CD8-positive, alpha-beta T cell (primary cell): ENCODE measurements at regions of chr1 and their contacts with region 1.

Region 1: GRCh38 chr1:10209905-10210810 is at the start of gene KIF1B:
- DNase-seq: peak; percentile 92 to 98 (median 97)
- ATAC-seq: peak; percentile 98
- H3K4me3 ChIP-seq: peak within 1 kb of the TSS; percentile 67 to 82
- H3K4me3 Mint-ChIP-seq: peak within 1 kb of the TSS; percentile 91
- H3K27ac ChIP-seq: peak within 1 kb of the TSS; percentile 54 to 60
- H3K27ac Mint-ChIP-seq: peak within 1 kb of the TSS; percentile 55
- H3K4me1 ChIP-seq: peaks cover 5% of the 10 kb centered on the region
- H3K4me1 Mint-ChIP-seq: peaks cover 25% of the 10 kb centered on the region
- H3K27me3 ChIP-seq: peaks cover 0 to 2% of the 10 kb centered on the region in 2 experiments
- H3K27me3 Mint-ChIP-seq: peaks cover 2% of the 10 kb centered on the region
- CTCF ChIP-seq: peak; percentile 99
- total RNA-seq, gene KIF1B: 6.1 to 7.2 TPM

Region 2: DNA sequence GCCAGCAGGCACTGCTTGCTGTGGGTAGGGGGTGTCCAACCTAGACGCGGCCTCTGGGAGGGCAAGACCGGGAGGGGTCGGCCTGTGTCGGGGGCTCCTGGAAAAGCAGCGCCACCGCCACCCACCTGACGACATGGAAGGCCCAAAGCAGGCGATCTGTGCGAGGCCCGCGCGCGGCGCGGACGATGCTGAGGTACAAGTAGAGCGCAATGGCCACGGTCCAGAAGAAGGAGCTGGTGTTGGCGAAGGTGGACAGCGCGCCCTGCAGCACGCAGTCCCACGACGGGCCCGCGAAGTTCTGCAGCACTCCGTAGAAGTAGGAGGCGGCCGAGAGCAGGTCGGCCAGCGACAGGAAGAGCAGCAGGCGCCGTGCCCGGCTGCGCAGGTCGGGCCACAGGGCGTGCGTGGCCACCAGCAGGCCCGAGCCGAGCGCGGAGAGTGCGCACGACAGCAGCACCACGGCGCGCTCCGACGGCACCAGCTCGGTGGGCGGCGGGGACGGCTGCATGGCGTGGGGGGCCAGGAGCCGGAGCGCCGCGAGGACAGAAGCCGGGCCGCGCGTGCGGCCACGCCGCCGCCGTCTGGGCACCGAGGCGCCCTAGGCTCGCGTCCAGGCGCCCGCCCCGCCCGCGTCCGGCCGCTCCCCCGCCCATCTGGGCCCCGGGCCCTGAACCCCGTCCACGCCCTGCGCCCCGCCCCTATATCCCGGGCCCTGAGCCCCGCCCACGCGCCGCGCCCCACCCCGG is 1081.5 kb before region 1 on chr1 and contains the start of gene GPR157:
- CTCF ChIA-PET with region 1: no interaction called
- POLR2A ChIA-PET with region 1: no interaction called
- intact Hi-C with region 1: loop called in 1 of 2 experiments (anchors 5 kb)
- DNase-seq: peak; percentile 56 to 88 (median 81)
- ATAC-seq: peak; percentile 84
- H3K4me3 ChIP-seq: peak within 1 kb of the TSS; percentile 61 to 68
- H3K4me3 Mint-ChIP-seq: peak within 1 kb of the TSS; percentile 90
- H3K27ac ChIP-seq: peak within 1 kb of the TSS; percentile 37 to 50
- H3K27ac Mint-ChIP-seq: peak within 1 kb of the TSS; percentile 75
- H3K4me1 ChIP-seq: peaks cover 33% of the 10 kb centered on the region
- H3K4me1 Mint-ChIP-seq: peaks cover 35% of the 10 kb centered on the region
- H3K27me3 ChIP-seq: no peaks in the 10 kb centered on the region
- H3K27me3 Mint-ChIP-seq: no peaks in the 10 kb centered on the region
- CTCF ChIP-seq: no peak
- total RNA-seq, gene GPR157: 1.9 to 2.9 TPM

Region 3: GRCh38 chr1:9990944-9991343 is 219.2 kb before region 1 on chr1:
- CTCF ChIA-PET with region 1: no interaction called
- POLR2A ChIA-PET with region 1: no interaction called
- intact Hi-C with region 1: no loop called
- DNase-seq: no peak
- ATAC-seq: no peak
- H3K4me3 ChIP-seq: no peak overlapping the region
- H3K4me3 Mint-ChIP-seq: no peak overlapping the region
- H3K27ac ChIP-seq: no peak overlapping the region
- H3K27ac Mint-ChIP-seq: no peak overlapping the region
- H3K4me1 ChIP-seq: no peaks in the 10 kb centered on the region
- H3K4me1 Mint-ChIP-seq: no peaks in the 10 kb centered on the region
- H3K27me3 ChIP-seq: peaks cover 0 to 6% of the 10 kb centered on the region in 2 experiments
- H3K27me3 Mint-ChIP-seq: peaks cover 12% of the 10 kb centered on the region
- CTCF ChIP-seq: no peak

Region 4: GRCh38 chr1:10225573-10225972 is 15.4 kb after region 1 on chr1:
- CTCF ChIA-PET with region 1: interaction called, 28 read pairs
- POLR2A ChIA-PET with region 1: no interaction called
- intact Hi-C with region 1: no loop called
- DNase-seq: no peak
- ATAC-seq: no peak
- H3K4me3 ChIP-seq: no peak overlapping the region
- H3K4me3 Mint-ChIP-seq: no peak overlapping the region
- H3K27ac ChIP-seq: no peak overlapping the region
- H3K27ac Mint-ChIP-seq: no peak overlapping the region
- H3K4me1 ChIP-seq: no peaks in the 10 kb centered on the region
- H3K4me1 Mint-ChIP-seq: peaks cover 4% of the 10 kb centered on the region
- H3K27me3 ChIP-seq: no peaks in the 10 kb centered on the region
- H3K27me3 Mint-ChIP-seq: no peaks in the 10 kb centered on the region
- CTCF ChIP-seq: no peak

Region 5: DNA sequence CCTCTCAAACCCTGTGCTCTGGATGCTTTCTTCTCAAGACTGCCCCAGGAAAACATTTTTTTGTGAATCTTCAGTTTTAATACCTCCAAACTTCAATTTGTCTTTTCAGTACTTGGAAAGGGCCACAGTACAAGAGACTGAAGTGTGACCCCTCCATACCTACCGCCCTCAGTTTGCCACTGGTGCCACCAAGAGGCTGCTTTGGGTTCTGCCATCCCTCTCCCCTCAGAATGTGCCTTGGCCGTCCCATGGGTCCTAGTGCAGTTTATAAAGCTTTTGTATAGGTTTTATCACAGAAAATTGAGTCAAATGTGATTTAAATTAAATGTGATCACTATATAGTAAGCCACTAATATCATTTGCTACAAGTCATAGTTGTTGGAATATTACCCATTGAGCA is 127.9 kb after region 1 on chr1:
- CTCF ChIA-PET with region 1: interaction called, 23 read pairs
- POLR2A ChIA-PET with region 1: no interaction called
- intact Hi-C with region 1: loop called (anchors 1 to 2 kb)
- DNase-seq: peak in 5 of 9 experiments; percentile 26 to 55 (median 30)
- ATAC-seq: peak; percentile 65
- H3K4me3 ChIP-seq: no peak overlapping the region
- H3K4me3 Mint-ChIP-seq: no peak overlapping the region
- H3K27ac ChIP-seq: no peak overlapping the region
- H3K27ac Mint-ChIP-seq: no peak overlapping the region
- H3K4me1 ChIP-seq: no peaks in the 10 kb centered on the region
- H3K4me1 Mint-ChIP-seq: no peaks in the 10 kb centered on the region
- H3K27me3 ChIP-seq: no peaks in the 10 kb centered on the region
- H3K27me3 Mint-ChIP-seq: no peaks in the 10 kb centered on the region
- CTCF ChIP-seq: peak; percentile 36

Region 6: DNA sequence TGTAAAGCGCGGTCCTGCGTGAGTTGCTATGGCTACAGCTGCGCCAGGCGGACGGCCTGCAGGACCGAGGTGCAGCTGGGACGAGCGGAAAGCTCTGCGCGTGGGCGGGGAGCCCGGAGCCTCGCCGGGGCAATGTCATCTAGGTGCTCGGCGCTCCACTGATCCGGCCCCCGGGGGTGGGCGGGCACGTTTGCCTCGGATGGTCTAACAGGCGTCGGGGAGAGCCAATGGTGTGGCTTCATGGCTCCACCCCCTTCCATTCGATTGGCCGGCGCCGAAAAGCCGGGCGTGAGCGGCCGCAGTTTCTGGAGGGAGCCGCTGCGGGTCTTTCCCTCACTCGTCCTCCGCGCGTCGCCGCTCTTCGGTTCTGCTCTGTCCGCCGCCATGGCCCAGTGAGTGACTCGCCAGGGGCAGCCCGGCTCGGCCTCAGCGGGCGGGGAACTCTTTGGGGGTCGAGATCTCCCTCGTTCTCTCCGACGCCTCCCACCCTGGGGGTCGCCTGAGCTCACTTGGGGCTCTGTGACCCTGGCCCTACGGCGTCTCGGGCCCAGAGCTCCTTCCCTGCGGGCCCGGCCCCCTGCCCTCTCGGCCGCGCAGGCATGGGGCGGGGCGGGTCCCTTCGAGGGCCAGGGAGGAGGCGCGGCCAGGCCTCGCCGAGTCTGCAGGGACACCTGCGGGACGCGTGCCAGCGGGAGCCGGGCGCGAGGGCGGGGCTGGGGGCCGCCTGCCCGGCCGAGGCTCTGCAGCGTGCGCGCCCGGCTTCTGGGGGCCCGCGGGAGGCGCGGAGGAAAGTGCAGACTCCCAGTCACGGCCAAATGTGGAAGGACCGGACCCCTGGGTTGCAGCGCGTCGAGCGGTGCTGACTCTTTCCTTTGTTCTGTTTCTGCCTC is 188.8 kb after region 1 on chr1 and contains the start of gene PGD:
- CTCF ChIA-PET with region 1: interaction called, 6 read pairs
- POLR2A ChIA-PET with region 1: interaction called, 6 read pairs
- intact Hi-C with region 1: loop called (anchors 1 kb)
- DNase-seq: peak; percentile 91 to 98 (median 97)
- ATAC-seq: peak; percentile 97
- H3K4me3 ChIP-seq: peak within 1 kb of the TSS; percentile 86 to 97
- H3K4me3 Mint-ChIP-seq: peak within 1 kb of the TSS; percentile 97
- H3K27ac ChIP-seq: peak within 1 kb of the TSS; percentile 57 to 67
- H3K27ac Mint-ChIP-seq: peak within 1 kb of the TSS; percentile 77
- H3K4me1 ChIP-seq: peaks cover 16% of the 10 kb centered on the region
- H3K4me1 Mint-ChIP-seq: peaks cover 22% of the 10 kb centered on the region
- H3K27me3 ChIP-seq: no peaks in the 10 kb centered on the region
- H3K27me3 Mint-ChIP-seq: no peaks in the 10 kb centered on the region
- CTCF ChIP-seq: no peak
- total RNA-seq, gene PGD: 20.2 to 21.7 TPM

Region 7: DNA sequence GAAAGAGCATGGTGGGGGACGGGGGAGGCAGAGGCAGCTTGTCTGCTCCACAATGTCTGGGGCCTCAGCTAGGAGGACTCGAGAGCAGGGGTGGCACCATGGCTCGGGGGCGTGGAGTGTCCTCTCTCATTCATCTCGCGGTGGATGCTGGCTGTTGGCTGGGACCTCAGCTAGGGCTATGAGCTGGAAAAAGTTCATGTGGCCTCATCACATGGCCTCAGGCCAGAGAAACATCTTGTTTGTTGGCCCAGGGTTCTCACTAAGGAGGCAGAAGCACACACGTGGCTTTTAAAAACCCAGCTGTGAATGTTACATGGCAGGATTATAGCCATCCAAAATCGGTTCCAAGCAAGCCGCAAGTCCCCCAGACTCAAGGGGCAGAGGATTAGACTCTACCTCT is 213.9 kb after region 1 on chr1:
- CTCF ChIA-PET with region 1: interaction called, 50 read pairs
- POLR2A ChIA-PET with region 1: no interaction called
- intact Hi-C with region 1: loop called in 1 of 2 experiments (anchors 1 kb)
- DNase-seq: no peak
- ATAC-seq: no peak
- H3K4me3 ChIP-seq: no peak overlapping the region
- H3K4me3 Mint-ChIP-seq: no peak overlapping the region
- H3K27ac ChIP-seq: no peak overlapping the region
- H3K27ac Mint-ChIP-seq: no peak overlapping the region
- H3K4me1 ChIP-seq: peaks cover 3% of the 10 kb centered on the region
- H3K4me1 Mint-ChIP-seq: peaks cover 2% of the 10 kb centered on the region
- H3K27me3 ChIP-seq: no peaks in the 10 kb centered on the region
- H3K27me3 Mint-ChIP-seq: no peaks in the 10 kb centered on the region
- CTCF ChIP-seq: no peak

Region 8: DNA sequence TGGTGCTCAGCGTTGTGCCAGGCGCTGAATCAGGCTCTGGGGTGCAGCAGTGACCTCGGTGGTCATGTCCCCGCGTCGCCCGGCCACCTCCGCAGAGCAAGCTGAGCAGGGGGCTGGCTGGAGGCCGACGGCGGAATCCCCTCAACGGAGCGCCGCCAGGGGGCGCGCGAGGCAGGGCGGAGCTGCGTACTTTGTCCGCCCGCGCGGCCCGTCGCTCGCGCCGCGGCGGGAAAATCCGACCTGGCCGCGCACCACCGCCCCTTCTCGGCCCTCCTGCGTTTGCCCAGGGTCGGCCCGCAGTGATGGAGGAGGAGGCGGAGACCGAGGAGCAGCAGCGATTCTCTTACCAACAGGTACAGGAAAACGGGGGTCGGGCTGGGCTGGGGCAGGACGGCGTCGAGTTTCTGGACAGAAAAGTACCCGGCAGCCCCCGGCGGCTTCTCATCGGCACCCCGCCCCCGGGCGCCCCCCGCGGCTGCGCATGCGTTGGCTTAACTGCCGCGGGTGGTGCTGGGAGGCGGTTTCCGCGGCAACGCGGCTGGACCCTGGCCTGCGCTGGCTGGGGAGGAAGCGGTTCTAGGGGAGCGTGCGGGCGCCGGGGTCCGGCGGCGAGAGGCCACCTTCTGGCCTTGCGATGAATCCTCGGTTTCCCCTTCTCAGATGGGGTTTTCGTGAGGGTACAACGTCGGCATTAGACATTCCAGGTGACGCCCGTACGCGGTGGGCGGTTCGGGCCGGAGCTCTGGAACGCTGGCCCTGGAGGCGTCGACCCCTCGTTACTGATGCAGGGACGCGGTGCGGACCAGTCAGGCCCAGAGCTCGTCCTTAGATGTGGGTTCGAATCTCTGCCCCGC is 220.3 kb after region 1 on chr1 and contains the start of gene CENPS:
- CTCF ChIA-PET with region 1: interaction called, 50 read pairs
- POLR2A ChIA-PET with region 1: interaction called, 4 read pairs
- intact Hi-C with region 1: loop called in 1 of 2 experiments (anchors 1 kb)
- DNase-seq: peak; percentile 72 to 95 (median 92)
- ATAC-seq: peak; percentile 85
- H3K4me3 ChIP-seq: peak within 1 kb of the TSS; percentile 85 to 96
- H3K4me3 Mint-ChIP-seq: peak within 1 kb of the TSS; percentile 89
- H3K27ac ChIP-seq: peak within 1 kb of the TSS; percentile 81 to 86
- H3K27ac Mint-ChIP-seq: peak within 1 kb of the TSS; percentile 91
- H3K4me1 ChIP-seq: peaks cover 18% of the 10 kb centered on the region
- H3K4me1 Mint-ChIP-seq: peaks cover 23% of the 10 kb centered on the region
- H3K27me3 ChIP-seq: no peaks in the 10 kb centered on the region
- H3K27me3 Mint-ChIP-seq: no peaks in the 10 kb centered on the region
- CTCF ChIP-seq: peak; percentile 97
- total RNA-seq, gene CENPS: 2.0 to 3.5 TPM